ENCODE measurements at regions of chr4 and their contacts with region 1.

Region 1: GRCh38 chr4:62279689-62280088 is 1079.6 kb downstream of the ADGRL3 start:
- DNase-seq: no peak
- ATAC-seq: no peak
- H3K4me3 ChIP-seq: no peak overlapping the region
- H3K27ac ChIP-seq: no peak overlapping the region
- H3K4me1 ChIP-seq: no peaks in the 10 kb centered on the region
- H3K27me3 ChIP-seq: no peaks in the 10 kb centered on the region
- CTCF ChIP-seq: no peak

Region 2: GRCh38 chr4:62260254-62260653 is 19.4 kb before region 1 on chr4:
- intact Hi-C with region 1: loop called in 1 of 2 experiments (anchors 1 kb)
- DNase-seq: no peak
- ATAC-seq: no peak
- H3K4me3 ChIP-seq: no peak overlapping the region
- H3K27ac ChIP-seq: no peak overlapping the region
- H3K4me1 ChIP-seq: no peaks in the 10 kb centered on the region
- H3K27me3 ChIP-seq: no peaks in the 10 kb centered on the region
- CTCF ChIP-seq: no peak